OCI-LY7 (cell line): ENCODE measurements at regions of chr7 and their contacts with region 1.

Region 1: DNA sequence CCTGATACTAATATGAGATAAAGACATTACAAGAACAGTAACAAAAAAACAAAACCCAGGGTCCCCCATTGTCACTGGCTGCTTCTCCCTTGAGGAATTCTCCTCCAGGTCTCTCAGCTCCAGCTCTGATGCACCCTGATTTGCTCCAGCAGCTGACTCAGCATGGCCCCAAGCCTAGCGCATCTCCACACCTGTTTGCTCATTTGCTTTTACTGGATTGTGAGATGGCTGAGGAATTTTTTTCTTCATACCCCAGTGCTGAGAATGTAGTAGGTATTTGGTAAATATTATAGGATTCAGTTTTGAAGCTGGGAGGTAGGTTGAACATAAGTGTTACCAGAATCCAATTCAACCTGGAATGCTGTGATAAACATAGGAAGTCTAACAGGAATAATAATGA is 171.9 kb downstream of the PKD1L1 start:
- DNase-seq: no peak
- H3K4me3 ChIP-seq: no peak overlapping the region
- H3K27ac ChIP-seq: no peak overlapping the region
- H3K4me1 ChIP-seq: peaks cover 12% of the 10 kb centered on the region
- CTCF ChIP-seq: no peak

Region 2: GRCh38 chr7:47765373-47765979 is 10.9 kb before region 1 on chr7:
- CTCF ChIA-PET with region 1: no interaction called
- POLR2A ChIA-PET with region 1: interaction called, 13 read pairs
- intact Hi-C with region 1: no loop called
- DNase-seq: no peak
- H3K4me3 ChIP-seq: no peak overlapping the region
- H3K27ac ChIP-seq: no peak overlapping the region
- H3K4me1 ChIP-seq: no peaks in the 10 kb centered on the region
- CTCF ChIP-seq: no peak